Dendritic cell treated with granulocyte-macrophage colony-stimulating factor and Interleukin-4, amounts not matched to agents 40 ng/mL and 50 ng/mL, for 4 days (primary cell): ENCODE measurements at regions of chr4 and their contacts with region 1.

Region 1: GRCh38 chr4:1167247-1167949 is 5.0 kb downstream of the SPON2 start:
- H3K4me3 Mint-ChIP-seq: peak overlapping the region; percentile 77
- H3K27ac Mint-ChIP-seq: peak overlapping the region; percentile 12
- H3K4me1 Mint-ChIP-seq: peaks cover 48% of the 10 kb centered on the region
- H3K27me3 Mint-ChIP-seq: peaks cover 69% of the 10 kb centered on the region

Region 2: GRCh38 chr4:1218634-1219565 is 51.5 kb after region 1 on chr4:
- intact Hi-C with region 1: loop called (anchors 5 kb)
- H3K4me3 Mint-ChIP-seq: peak overlapping the region; percentile 34
- H3K27ac Mint-ChIP-seq: peak overlapping the region; percentile 63
- H3K4me1 Mint-ChIP-seq: peaks cover 53% of the 10 kb centered on the region
- H3K27me3 Mint-ChIP-seq: no peaks in the 10 kb centered on the region

Region 3: GRCh38 chr4:1266881-1267763 is 99.7 kb after region 1 on chr4:
- intact Hi-C with region 1: loop called (anchors 2 kb)
- H3K4me3 Mint-ChIP-seq: no peak overlapping the region
- H3K27ac Mint-ChIP-seq: no peak overlapping the region
- H3K4me1 Mint-ChIP-seq: peaks cover 10% of the 10 kb centered on the region
- H3K27me3 Mint-ChIP-seq: peaks cover 1% of the 10 kb centered on the region